ENCODE measurements at regions of chr10 and their contacts with region 1.

Region 1: GRCh38 chr10:126160971-126161659 is 227.2 kb downstream of the ADAM12 start:
- DNase-seq: peak; percentile 50
- ATAC-seq: peak; percentile 82
- H3K4me3 ChIP-seq: no peak overlapping the region
- H3K27ac ChIP-seq: no peak overlapping the region
- H3K4me1 ChIP-seq: no peaks in the 10 kb centered on the region
- H3K27me3 ChIP-seq: peaks cover 58% of the 10 kb centered on the region
- CTCF ChIP-seq: peak; percentile 74 to 93 (median 88)
- POLR2A ChIP-seq: no peak
- RAD21 ChIP-seq: peak; percentile 91

Region 2: DNA sequence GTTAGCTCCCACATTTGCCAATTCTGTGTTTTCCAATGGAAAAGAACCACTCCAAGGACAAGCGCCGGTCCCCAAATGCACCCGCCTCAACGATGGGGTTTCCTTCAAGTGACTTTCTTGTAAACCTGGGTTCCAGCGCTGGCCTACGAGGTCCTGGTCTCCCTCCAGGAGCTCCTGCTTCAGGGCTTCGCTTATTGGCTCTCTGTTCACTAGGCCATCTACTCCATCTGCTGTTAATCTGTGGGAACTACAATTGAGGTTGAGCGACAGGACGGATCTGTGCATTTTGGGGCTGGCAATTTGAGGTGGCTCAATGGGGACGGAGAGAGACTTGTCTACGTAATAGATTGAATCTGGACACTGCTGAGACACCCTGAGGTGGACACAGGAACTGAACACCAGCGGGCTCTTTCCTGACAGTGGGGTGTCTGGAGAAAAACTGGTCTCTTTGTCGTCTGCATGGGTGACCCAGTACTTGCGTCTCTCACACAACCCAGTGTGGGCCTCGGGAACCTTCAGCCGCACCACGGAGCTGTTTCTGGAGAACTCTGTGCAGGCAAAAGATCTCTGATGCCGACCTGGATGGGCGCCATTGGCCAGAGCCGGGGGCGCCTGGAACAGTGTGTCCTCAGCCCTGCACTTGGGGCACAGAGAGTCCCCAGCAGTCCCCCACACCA is 343.1 kb after region 1 on chr10:
- CTCF ChIA-PET with region 1: interaction called, 19 read pairs
- POLR2A ChIA-PET with region 1: no interaction called
- RAD21 ChIA-PET with region 1: interaction called in 1 of 2 experiments, 5 read pairs
- intact Hi-C with region 1: loop called (anchors 1 kb)
- DNase-seq: peak; percentile 68
- ATAC-seq: peak; percentile 96
- H3K4me3 ChIP-seq: no peak overlapping the region
- H3K27ac ChIP-seq: no peak overlapping the region
- H3K4me1 ChIP-seq: no peaks in the 10 kb centered on the region
- H3K27me3 ChIP-seq: peaks cover 25% of the 10 kb centered on the region; the same call in 1 of the 2 replicates
- CTCF ChIP-seq: peak; percentile 74 to 83 (median 75)
- POLR2A ChIP-seq: no peak
- RAD21 ChIP-seq: peak; percentile 91

Region 3: GRCh38 chr10:126598003-126598402 is 436.9 kb after region 1 on chr10:
- CTCF ChIA-PET with region 1: interaction called, 7 read pairs
- POLR2A ChIA-PET with region 1: no interaction called
- RAD21 ChIA-PET with region 1: no interaction called
- intact Hi-C with region 1: loop called (anchors 5 kb)
- DNase-seq: peak; percentile 38
- ATAC-seq: peak; percentile 98
- H3K4me3 ChIP-seq: no peak overlapping the region
- H3K27ac ChIP-seq: no peak overlapping the region
- H3K4me1 ChIP-seq: no peaks in the 10 kb centered on the region
- H3K27me3 ChIP-seq: peaks cover 53% of the 10 kb centered on the region
- CTCF ChIP-seq: peak; percentile 55 to 93 (median 86); a peak in 5 of 6 replicates
- POLR2A ChIP-seq: no peak
- RAD21 ChIP-seq: peak; percentile 66

Region 4: GRCh38 chr10:126749015-126749655 is 588.0 kb after region 1 on chr10:
- CTCF ChIA-PET with region 1: interaction called, 4 read pairs
- POLR2A ChIA-PET with region 1: no interaction called
- RAD21 ChIA-PET with region 1: no interaction called
- intact Hi-C with region 1: loop called (anchors 1 kb)
- DNase-seq: peak; percentile 70
- ATAC-seq: peak; percentile 100
- H3K4me3 ChIP-seq: no peak overlapping the region
- H3K27ac ChIP-seq: no peak overlapping the region
- H3K4me1 ChIP-seq: no peaks in the 10 kb centered on the region
- H3K27me3 ChIP-seq: peaks cover 5% of the 10 kb centered on the region; the same call in 1 of the 2 replicates
- CTCF ChIP-seq: peak; percentile 71 to 98 (median 96)
- POLR2A ChIP-seq: no peak
- RAD21 ChIP-seq: peak; percentile 83

Measured in HCT116 (cell line).